Activated B cell treated with CpG ODN at 0.5 μM for 24 hours (primary cell): ENCODE measurements at regions of chr5 and their contacts with region 1.

Region 1: GRCh38 chr5:179697993-179698934 is 503 bp upstream of the CANX start:
- DNase-seq: peak; percentile 96
- ATAC-seq: peak; percentile 89
- H3K4me3 Mint-ChIP-seq: peak overlapping the region; percentile 97
- H3K27ac Mint-ChIP-seq: peak overlapping the region; percentile 99
- H3K4me1 Mint-ChIP-seq: peaks cover 41% of the 10 kb centered on the region
- H3K27me3 Mint-ChIP-seq: no peaks in the 10 kb centered on the region
- CTCF ChIP-seq: no peak

Region 2: DNA sequence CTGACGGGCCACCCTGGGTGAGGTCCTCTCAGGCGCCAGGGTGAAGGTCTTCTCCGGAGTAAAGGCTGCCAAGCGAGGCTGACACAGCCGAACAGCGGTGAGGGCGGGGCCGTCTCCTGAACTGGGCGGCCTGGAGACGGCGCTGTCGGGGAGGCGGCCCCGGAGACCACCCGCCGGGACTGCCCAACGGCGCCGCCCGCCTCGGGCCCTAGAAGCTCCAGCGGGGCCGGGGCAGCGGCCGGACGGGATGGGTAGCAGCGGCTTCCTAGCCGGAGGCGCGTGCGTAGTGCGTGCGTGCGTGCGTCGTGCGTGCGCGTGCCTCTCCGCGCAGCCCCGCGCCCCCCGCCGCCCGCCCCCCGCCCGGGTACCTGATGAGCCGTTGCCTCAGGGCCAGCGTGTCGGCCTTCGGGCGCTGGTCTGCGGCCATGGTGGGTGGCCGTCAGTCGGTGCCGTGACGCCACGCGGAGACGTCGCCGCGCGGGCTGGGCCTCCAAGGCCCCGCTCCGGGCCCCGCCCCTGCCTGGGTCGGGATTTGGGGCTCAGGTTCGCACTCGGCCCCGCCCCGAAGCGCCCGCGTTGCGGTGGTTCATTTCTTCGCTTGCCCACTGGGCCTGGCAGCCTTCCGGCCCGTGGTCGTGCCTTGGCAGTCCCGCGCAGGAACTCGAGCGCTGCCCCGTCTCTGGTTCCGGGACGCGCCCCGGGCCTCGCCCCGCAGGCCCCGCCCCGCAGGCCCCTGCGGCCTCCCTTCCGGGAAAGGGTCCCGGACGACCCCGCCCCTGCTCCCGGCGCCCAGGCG is 1465.9 kb before region 1 on chr5 and contains the start of gene PHYKPL:
- CTCF ChIA-PET with region 1: no interaction called
- POLR2A ChIA-PET with region 1: no interaction called
- intact Hi-C with region 1: loop called (anchors 2 kb)
- DNase-seq: peak; percentile 74
- ATAC-seq: peak; percentile 75
- H3K4me3 Mint-ChIP-seq: peak within 1 kb of the TSS; percentile 86
- H3K27ac Mint-ChIP-seq: peak within 1 kb of the TSS; percentile 84
- H3K4me1 Mint-ChIP-seq: peaks cover 47% of the 10 kb centered on the region
- H3K27me3 Mint-ChIP-seq: no peaks in the 10 kb centered on the region
- CTCF ChIP-seq: no peak
- total RNA-seq, gene PHYKPL: 176 and 205 TPM in 2 replicates

Region 3: GRCh38 chr5:179668391-179668790 is 29.9 kb before region 1 on chr5:
- CTCF ChIA-PET with region 1: no interaction called
- POLR2A ChIA-PET with region 1: interaction called, 11 read pairs
- intact Hi-C with region 1: no loop called
- DNase-seq: no peak
- ATAC-seq: no peak
- H3K4me3 Mint-ChIP-seq: no peak overlapping the region
- H3K27ac Mint-ChIP-seq: no peak overlapping the region
- H3K4me1 Mint-ChIP-seq: no peaks in the 10 kb centered on the region
- H3K27me3 Mint-ChIP-seq: no peaks in the 10 kb centered on the region
- CTCF ChIP-seq: no peak

Region 4: GRCh38 chr5:179795863-179796833 is 97.9 kb after region 1 on chr5:
- CTCF ChIA-PET with region 1: no interaction called
- POLR2A ChIA-PET with region 1: interaction called, 3 read pairs
- intact Hi-C with region 1: loop called (anchors 2 kb)
- DNase-seq: peak; percentile 78
- ATAC-seq: peak; percentile 78
- H3K4me3 Mint-ChIP-seq: peak overlapping the region; percentile 64
- H3K27ac Mint-ChIP-seq: peak overlapping the region; percentile 7
- H3K4me1 Mint-ChIP-seq: peaks cover 29% of the 10 kb centered on the region
- H3K27me3 Mint-ChIP-seq: no peaks in the 10 kb centered on the region
- CTCF ChIP-seq: peak; percentile 32

Region 5: DNA sequence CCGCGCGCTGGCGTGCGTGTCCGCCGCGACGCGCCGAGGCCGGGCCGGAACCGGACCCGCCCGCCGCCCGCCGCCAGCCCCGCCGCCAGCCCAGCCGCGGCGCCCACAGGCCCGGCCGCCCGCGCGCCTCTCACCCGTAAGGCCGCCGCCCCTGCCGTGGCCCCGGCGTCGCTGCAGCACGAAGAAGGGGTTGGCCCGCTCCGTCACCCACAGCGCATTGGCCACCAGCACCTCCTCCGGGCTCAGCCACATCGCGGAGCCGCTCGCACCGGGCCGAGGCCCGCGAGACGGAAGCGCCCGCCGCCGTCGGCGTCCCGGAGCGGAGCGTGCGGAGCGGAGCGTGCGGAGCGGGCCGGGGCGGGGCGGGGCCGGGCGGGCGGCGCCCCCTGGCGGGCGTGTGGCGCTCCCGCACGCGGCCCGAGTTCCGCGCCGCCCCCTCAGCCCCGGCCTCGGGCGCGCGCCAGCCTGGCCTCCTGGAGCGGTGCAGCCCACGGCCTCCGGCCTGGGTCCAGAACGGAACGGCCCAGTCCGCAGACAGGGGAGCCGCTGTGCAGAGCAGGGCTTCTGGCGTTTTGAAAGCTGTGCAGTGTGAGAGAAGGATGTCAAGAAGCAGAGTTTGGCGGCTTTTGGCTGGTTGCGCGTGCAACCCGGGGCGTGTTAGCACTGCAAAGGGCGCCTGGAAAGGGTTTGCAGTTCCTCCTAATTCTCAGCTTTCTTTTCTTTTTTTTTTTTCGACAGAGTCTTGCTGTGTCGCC is 209.5 kb after region 1 on chr5 and contains the start of gene TBC1D9B:
- CTCF ChIA-PET with region 1: no interaction called
- POLR2A ChIA-PET with region 1: no interaction called
- intact Hi-C with region 1: loop called (anchors 10 kb)
- DNase-seq: peak; percentile 74
- ATAC-seq: peak; percentile 90
- H3K4me3 Mint-ChIP-seq: peak within 1 kb of the TSS; percentile 87
- H3K27ac Mint-ChIP-seq: peak within 1 kb of the TSS; percentile 83
- H3K4me1 Mint-ChIP-seq: peaks cover 29% of the 10 kb centered on the region
- H3K27me3 Mint-ChIP-seq: no peaks in the 10 kb centered on the region
- CTCF ChIP-seq: no peak
- total RNA-seq, gene TBC1D9B: 111 and 117 TPM in 2 replicates

Region 6: DNA sequence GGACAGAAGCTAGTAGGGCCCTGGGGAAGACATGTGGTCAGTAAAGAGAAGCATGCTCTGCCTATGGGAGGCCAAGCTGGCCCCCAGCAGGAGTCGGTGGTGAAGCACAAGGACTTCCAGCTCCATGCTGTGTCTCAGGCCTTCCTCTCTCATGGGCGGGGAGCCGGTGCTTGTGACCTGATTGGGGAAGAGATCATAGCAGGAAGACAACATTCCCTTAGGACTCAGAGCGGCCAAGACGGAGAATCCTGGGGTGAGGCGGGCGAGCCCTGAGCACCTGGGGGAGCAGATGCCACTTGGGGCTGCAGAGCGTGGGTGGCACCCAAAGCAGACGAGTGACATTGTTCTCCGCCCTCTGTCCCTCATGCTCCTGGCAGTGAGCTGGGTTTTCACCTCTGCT is 762.6 kb after region 1 on chr5:
- CTCF ChIA-PET with region 1: no interaction called
- POLR2A ChIA-PET with region 1: no interaction called
- intact Hi-C with region 1: no loop called
- DNase-seq: no peak
- ATAC-seq: no peak
- H3K4me3 Mint-ChIP-seq: no peak overlapping the region
- H3K27ac Mint-ChIP-seq: no peak overlapping the region
- H3K4me1 Mint-ChIP-seq: no peaks in the 10 kb centered on the region
- H3K27me3 Mint-ChIP-seq: peaks cover 3% of the 10 kb centered on the region
- CTCF ChIP-seq: no peak